CD4-positive, alpha-beta T cell (primary cell): ENCODE measurements at regions of chr16 and their contacts with region 1.

Region 1: GRCh38 chr16:23803591-23804123 is 32.1 kb upstream of the PRKCB start:
- DNase-seq: peak; percentile 56 to 84 (median 67)
- ATAC-seq: peak; percentile 92
- H3K4me3 ChIP-seq: no peak overlapping the region
- H3K4me3 Mint-ChIP-seq: no peak overlapping the region
- H3K27ac ChIP-seq: no peak overlapping the region
- H3K27ac Mint-ChIP-seq: no peak overlapping the region
- H3K4me1 ChIP-seq: no peaks in the 10 kb centered on the region
- H3K4me1 Mint-ChIP-seq: peaks cover 11% of the 10 kb centered on the region
- H3K27me3 ChIP-seq: no peaks in the 10 kb centered on the region
- H3K27me3 Mint-ChIP-seq: no peaks in the 10 kb centered on the region
- CTCF ChIP-seq: peak; percentile 86

Region 2: GRCh38 chr16:23419989-23420388 is 383.7 kb before region 1 on chr16:
- CTCF ChIA-PET with region 1: no interaction called
- POLR2A ChIA-PET with region 1: no interaction called
- intact Hi-C with region 1: no loop called
- DNase-seq: no peak
- ATAC-seq: no peak
- H3K4me3 ChIP-seq: no peak overlapping the region
- H3K4me3 Mint-ChIP-seq: no peak overlapping the region
- H3K27ac ChIP-seq: no peak overlapping the region
- H3K27ac Mint-ChIP-seq: no peak overlapping the region
- H3K4me1 ChIP-seq: no peaks in the 10 kb centered on the region
- H3K4me1 Mint-ChIP-seq: no peaks in the 10 kb centered on the region
- H3K27me3 ChIP-seq: no peaks in the 10 kb centered on the region
- H3K27me3 Mint-ChIP-seq: no peaks in the 10 kb centered on the region
- CTCF ChIP-seq: no peak

Region 3: GRCh38 chr16:23835390-23836077 is 31.9 kb after region 1 on chr16 and contains the start of gene PRKCB:
- CTCF ChIA-PET with region 1: interaction called, 8 read pairs
- POLR2A ChIA-PET with region 1: interaction called, 5 read pairs
- intact Hi-C with region 1: loop called (anchors 2 kb)
- DNase-seq: peak; percentile 79 to 95 (median 88)
- ATAC-seq: peak; percentile 86
- H3K4me3 ChIP-seq: peak within 1 kb of the TSS; percentile 82
- H3K4me3 Mint-ChIP-seq: peak within 1 kb of the TSS; percentile 99
- H3K27ac ChIP-seq: peak within 1 kb of the TSS; percentile 18 to 59
- H3K27ac Mint-ChIP-seq: peak within 1 kb of the TSS; percentile 85
- H3K4me1 ChIP-seq: peaks cover 57% of the 10 kb centered on the region
- H3K4me1 Mint-ChIP-seq: peaks cover 66% of the 10 kb centered on the region
- H3K27me3 ChIP-seq: no peaks in the 10 kb centered on the region
- H3K27me3 Mint-ChIP-seq: no peaks in the 10 kb centered on the region
- CTCF ChIP-seq: no peak
- total RNA-seq, gene PRKCB: 64.7 TPM

Region 4: GRCh38 chr16:23877107-23878090 is 73.7 kb after region 1 on chr16:
- CTCF ChIA-PET with region 1: no interaction called
- POLR2A ChIA-PET with region 1: no interaction called
- intact Hi-C with region 1: loop called in 1 of 2 experiments (anchors 5 kb)
- DNase-seq: peak in 8 of 14 experiments; percentile 9 to 47 (median 22)
- ATAC-seq: peak; percentile 44
- H3K4me3 ChIP-seq: no peak overlapping the region
- H3K4me3 Mint-ChIP-seq: no peak overlapping the region
- H3K27ac ChIP-seq: no peak overlapping the region
- H3K27ac Mint-ChIP-seq: peak overlapping the region; percentile 49
- H3K4me1 ChIP-seq: peaks cover 26% of the 10 kb centered on the region
- H3K4me1 Mint-ChIP-seq: peaks cover 77% of the 10 kb centered on the region
- H3K27me3 ChIP-seq: no peaks in the 10 kb centered on the region
- H3K27me3 Mint-ChIP-seq: no peaks in the 10 kb centered on the region
- CTCF ChIP-seq: peak; percentile 41

Region 5: GRCh38 chr16:24010440-24011089 is 206.9 kb after region 1 on chr16:
- CTCF ChIA-PET with region 1: interaction called, 29 read pairs
- POLR2A ChIA-PET with region 1: interaction called, 10 read pairs
- intact Hi-C with region 1: loop called (anchors 1 kb)
- DNase-seq: peak; percentile 66 to 91 (median 78)
- ATAC-seq: peak; percentile 30
- H3K4me3 ChIP-seq: no peak overlapping the region
- H3K4me3 Mint-ChIP-seq: no peak overlapping the region
- H3K27ac ChIP-seq: no peak overlapping the region
- H3K27ac Mint-ChIP-seq: peak overlapping the region; percentile 67
- H3K4me1 ChIP-seq: peaks cover 43% of the 10 kb centered on the region
- H3K4me1 Mint-ChIP-seq: peaks cover 57% of the 10 kb centered on the region
- H3K27me3 ChIP-seq: no peaks in the 10 kb centered on the region
- H3K27me3 Mint-ChIP-seq: no peaks in the 10 kb centered on the region
- CTCF ChIP-seq: peak; percentile 84

Region 6: DNA sequence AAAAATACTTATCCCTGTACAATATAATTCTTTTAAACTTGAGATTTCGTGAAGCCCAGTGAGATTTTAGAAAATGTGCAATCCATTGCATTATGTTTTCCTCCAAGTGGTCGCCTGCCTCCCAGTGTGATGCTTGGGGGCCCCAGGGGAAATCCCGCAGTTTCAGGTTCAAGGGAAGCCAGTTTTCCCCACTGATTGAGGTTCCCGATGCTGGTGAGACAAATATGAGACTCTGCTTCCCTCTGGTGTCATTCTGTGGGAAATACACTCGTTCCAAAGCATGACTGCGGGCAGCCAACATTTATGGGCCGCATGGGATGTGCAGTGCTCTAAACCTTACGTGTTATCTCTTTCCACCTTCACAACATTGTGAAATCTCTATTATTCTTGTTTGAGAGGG is 233.0 kb after region 1 on chr16:
- CTCF ChIA-PET with region 1: interaction called, 10 read pairs
- POLR2A ChIA-PET with region 1: interaction called, 3 read pairs
- intact Hi-C with region 1: loop called (anchors 1 kb)
- DNase-seq: peak in 9 of 14 experiments; percentile 5 to 69 (median 28)
- ATAC-seq: peak; percentile 52
- H3K4me3 ChIP-seq: no peak overlapping the region
- H3K4me3 Mint-ChIP-seq: peak overlapping the region; percentile 31
- H3K27ac ChIP-seq: no peak overlapping the region
- H3K27ac Mint-ChIP-seq: peak overlapping the region; percentile 40
- H3K4me1 ChIP-seq: peaks cover 38% of the 10 kb centered on the region
- H3K4me1 Mint-ChIP-seq: peaks cover 43% of the 10 kb centered on the region
- H3K27me3 ChIP-seq: no peaks in the 10 kb centered on the region
- H3K27me3 Mint-ChIP-seq: no peaks in the 10 kb centered on the region
- CTCF ChIP-seq: peak; percentile 72

Region 7: DNA sequence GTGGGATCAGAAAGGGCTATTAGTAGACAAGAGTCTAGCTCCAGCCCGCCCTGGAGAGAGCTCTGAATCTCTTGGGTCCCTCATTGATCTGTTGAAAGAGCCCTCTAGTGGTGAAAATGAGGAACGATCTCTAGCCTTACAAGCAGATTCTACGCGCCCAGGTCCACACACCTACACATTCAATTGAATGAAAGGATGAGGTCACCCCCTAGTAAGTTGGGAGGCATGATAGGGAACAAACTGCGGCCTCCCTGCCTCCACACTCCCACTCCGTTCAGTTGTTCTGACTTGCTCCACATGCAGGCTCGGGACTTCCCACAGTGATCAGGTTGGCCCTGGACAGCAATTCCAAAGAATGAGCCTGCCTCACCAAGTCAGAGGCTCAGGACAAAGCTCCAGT is 449.5 kb after region 1 on chr16:
- CTCF ChIA-PET with region 1: no interaction called
- POLR2A ChIA-PET with region 1: no interaction called
- intact Hi-C with region 1: loop called in 1 of 2 experiments (anchors 2 kb)
- DNase-seq: peak in 11 of 14 experiments; percentile 2 to 69 (median 18)
- ATAC-seq: peak; percentile 58
- H3K4me3 ChIP-seq: no peak overlapping the region
- H3K4me3 Mint-ChIP-seq: no peak overlapping the region
- H3K27ac ChIP-seq: no peak overlapping the region
- H3K27ac Mint-ChIP-seq: no peak overlapping the region
- H3K4me1 ChIP-seq: no peaks in the 10 kb centered on the region
- H3K4me1 Mint-ChIP-seq: no peaks in the 10 kb centered on the region
- H3K27me3 ChIP-seq: peaks cover 31 to 50% of the 10 kb centered on the region in 2 experiments
- H3K27me3 Mint-ChIP-seq: peaks cover 50% of the 10 kb centered on the region
- CTCF ChIP-seq: peak; percentile 78

Region 8: DNA sequence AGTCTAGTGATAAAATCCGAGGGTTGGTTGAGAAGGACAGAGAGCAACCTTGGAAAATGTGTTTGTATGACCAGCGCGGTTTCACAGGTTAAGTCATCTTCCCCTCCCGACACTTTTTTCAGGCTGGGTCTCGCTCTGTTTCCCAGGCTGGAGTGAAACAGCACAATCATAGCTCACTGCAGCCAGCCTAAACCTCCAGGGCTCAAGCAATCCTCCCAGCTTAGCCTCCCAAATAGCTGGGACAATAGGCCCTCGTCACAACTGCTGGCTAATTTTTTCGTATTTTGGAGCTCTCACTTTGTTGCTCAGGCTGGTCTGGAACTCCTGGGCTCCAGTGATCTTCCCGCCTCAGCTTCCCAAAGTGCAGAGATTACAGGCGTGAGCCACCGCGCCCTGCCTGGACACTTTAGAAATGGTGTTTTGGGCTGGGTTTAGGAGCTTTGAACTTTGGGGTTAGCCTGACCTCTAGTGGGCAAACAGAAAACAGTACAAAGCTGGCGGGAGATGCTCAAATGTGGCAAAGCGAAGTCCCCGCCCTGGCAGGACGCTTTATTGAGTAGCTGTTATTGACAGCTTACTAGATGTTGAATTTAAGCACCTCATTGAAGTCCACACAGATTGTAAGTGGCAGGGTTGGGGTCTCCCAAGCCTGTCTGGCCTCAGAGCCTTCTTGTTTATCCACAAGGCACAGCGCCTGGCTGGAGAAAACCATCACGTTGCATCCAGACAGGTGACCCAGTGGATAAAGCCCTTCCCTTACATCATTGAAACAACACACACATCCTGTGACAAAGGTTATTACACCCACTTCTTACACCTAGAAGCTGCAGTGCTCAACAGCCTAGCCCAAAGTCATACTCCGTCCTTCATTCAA is 701.1 kb after region 1 on chr16:
- CTCF ChIA-PET with region 1: no interaction called
- POLR2A ChIA-PET with region 1: no interaction called
- intact Hi-C with region 1: loop called in 1 of 2 experiments (anchors 2 kb)
- DNase-seq: peak; percentile 18 to 79 (median 30)
- ATAC-seq: peak; percentile 81
- H3K4me3 ChIP-seq: no peak overlapping the region
- H3K4me3 Mint-ChIP-seq: no peak overlapping the region
- H3K27ac ChIP-seq: no peak overlapping the region
- H3K27ac Mint-ChIP-seq: no peak overlapping the region
- H3K4me1 ChIP-seq: no peaks in the 10 kb centered on the region
- H3K4me1 Mint-ChIP-seq: no peaks in the 10 kb centered on the region
- H3K27me3 ChIP-seq: peaks cover 0 to 6% of the 10 kb centered on the region in 2 experiments
- H3K27me3 Mint-ChIP-seq: peaks cover 24% of the 10 kb centered on the region
- CTCF ChIP-seq: peak; percentile 71

Region 9: DNA sequence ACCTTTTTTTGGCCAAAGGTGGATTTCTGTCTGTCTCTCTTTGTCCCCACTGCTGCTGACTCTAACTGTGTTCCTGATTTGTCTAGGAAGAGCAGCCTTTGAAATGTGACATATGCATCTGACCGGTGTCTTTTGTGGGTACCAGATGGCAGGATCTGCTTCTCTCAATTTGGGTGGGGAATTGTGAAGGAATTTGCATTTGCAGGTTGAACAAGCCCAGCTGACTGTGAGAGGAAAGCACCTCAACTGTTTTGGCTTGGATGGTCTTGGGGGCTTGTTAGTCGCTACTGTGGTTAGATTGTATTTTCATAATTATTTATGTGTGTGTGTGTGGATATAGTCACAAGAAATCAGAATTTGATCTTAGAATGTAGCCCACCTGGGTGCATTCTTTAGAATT is 1270.2 kb after region 1 on chr16:
- CTCF ChIA-PET with region 1: no interaction called
- POLR2A ChIA-PET with region 1: no interaction called
- intact Hi-C with region 1: no loop called
- DNase-seq: no peak
- ATAC-seq: no peak
- H3K4me3 ChIP-seq: no peak overlapping the region
- H3K4me3 Mint-ChIP-seq: no peak overlapping the region
- H3K27ac ChIP-seq: no peak overlapping the region
- H3K27ac Mint-ChIP-seq: no peak overlapping the region
- H3K4me1 ChIP-seq: no peaks in the 10 kb centered on the region
- H3K4me1 Mint-ChIP-seq: no peaks in the 10 kb centered on the region
- H3K27me3 ChIP-seq: no peaks in the 10 kb centered on the region
- H3K27me3 Mint-ChIP-seq: no peaks in the 10 kb centered on the region
- CTCF ChIP-seq: no peak